Esophagus muscularis mucosa (tissue), 4 donors: ENCODE measurements at regions of chr20 and their contacts with region 1.

Region 1: GRCh38 chr20:37384683-37385174 is 38.8 kb downstream of the SRC start:
- DNase-seq: no peak
- H3K4me3 ChIP-seq: peak overlapping the region; percentile 47 to 66 (median 58)
- H3K27ac ChIP-seq: peak overlapping the region in 2 of 4 donors; percentile 60 to 61
- H3K4me1 ChIP-seq: peaks cover 9 to 25% (median 18%) of the 10 kb centered on the region in 4 donors
- H3K27me3 ChIP-seq: no peaks in the 10 kb centered on the region
- CTCF ChIP-seq: peak; percentile 91 to 96 (median 93)
- EP300 ChIP-seq: no peak
- POLR2A ChIP-seq: no peak

Region 2: DNA sequence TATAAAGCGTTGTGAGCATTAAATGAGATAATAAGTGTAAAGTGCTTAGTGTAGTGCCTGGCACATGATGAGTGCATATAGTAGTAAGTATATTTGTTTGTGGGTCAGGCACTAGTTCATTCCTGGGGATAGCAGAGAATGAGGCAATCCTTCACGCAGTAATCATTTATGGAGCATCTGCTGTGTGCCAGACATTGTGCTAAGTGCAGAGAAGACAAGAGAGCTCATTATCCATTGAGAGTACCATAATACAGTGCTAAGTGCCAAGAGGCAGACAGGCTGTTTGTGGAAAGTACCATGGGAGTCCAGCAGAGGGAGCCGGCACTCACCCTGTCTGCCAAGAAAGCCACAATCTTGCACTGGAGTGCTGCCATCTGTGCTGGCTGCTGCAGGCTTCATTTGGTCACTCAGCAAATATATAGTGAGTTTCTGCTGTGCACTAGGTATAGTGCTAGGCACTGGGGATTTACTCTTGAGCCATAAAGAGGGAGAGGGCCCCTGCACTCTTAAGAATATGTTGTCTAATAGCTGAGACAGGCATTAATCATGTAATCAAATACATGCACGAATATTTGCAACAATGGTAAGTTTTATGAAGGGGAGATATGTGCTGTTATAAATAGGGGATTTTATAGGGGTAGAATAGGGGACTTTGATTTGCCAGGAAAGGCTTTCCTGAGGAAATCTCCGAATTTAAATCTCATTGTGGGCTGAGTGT is 192.4 kb before region 1 on chr20:
- intact Hi-C with region 1: loop called (anchors 5 kb)
- DNase-seq: peak; percentile 95
- H3K4me3 ChIP-seq: no peak overlapping the region
- H3K27ac ChIP-seq: peak overlapping the region in 1 of 4 donors; percentile 18
- H3K4me1 ChIP-seq: peaks cover 33 to 69% (median 67%) of the 10 kb centered on the region in 4 donors
- H3K27me3 ChIP-seq: no peaks in the 10 kb centered on the region
- CTCF ChIP-seq: peak; percentile 91 to 94 (median 93)
- EP300 ChIP-seq: no peak
- POLR2A ChIP-seq: no peak

Region 3: GRCh38 chr20:37282556-37282955 is 102.2 kb before region 1 on chr20:
- intact Hi-C with region 1: loop called (anchors 2 kb)
- DNase-seq: no peak
- H3K4me3 ChIP-seq: no peak overlapping the region
- H3K27ac ChIP-seq: peak overlapping the region; percentile 20 to 56 (median 39)
- H3K4me1 ChIP-seq: peaks cover 0 to 10% (median 7%) of the 10 kb centered on the region in 4 donors
- H3K27me3 ChIP-seq: no peaks in the 10 kb centered on the region
- CTCF ChIP-seq: peak; percentile 47 to 68 (median 66)
- EP300 ChIP-seq: no peak
- POLR2A ChIP-seq: no peak

Region 4: GRCh38 chr20:37345339-37346230 is 39.1 kb before region 1 on chr20 and contains the start of gene SRC:
- intact Hi-C with region 1: loop called (anchors 5 kb)
- DNase-seq: peak; percentile 95
- H3K4me3 ChIP-seq: peak within 1 kb of the TSS; percentile 72 to 91 (median 84)
- H3K27ac ChIP-seq: peak within 1 kb of the TSS; percentile 86 to 96 (median 92)
- H3K4me1 ChIP-seq: peaks cover 4 to 54% (median 43%) of the 10 kb centered on the region in 4 donors
- H3K27me3 ChIP-seq: peaks cover 0 to 10% (median 0%) of the 10 kb centered on the region in 4 donors
- CTCF ChIP-seq: no peak
- EP300 ChIP-seq: no peak
- POLR2A ChIP-seq: no peak
- total RNA-seq, gene SRC: 27.5 to 52.2 (median 42.3) TPM

Region 5: DNA sequence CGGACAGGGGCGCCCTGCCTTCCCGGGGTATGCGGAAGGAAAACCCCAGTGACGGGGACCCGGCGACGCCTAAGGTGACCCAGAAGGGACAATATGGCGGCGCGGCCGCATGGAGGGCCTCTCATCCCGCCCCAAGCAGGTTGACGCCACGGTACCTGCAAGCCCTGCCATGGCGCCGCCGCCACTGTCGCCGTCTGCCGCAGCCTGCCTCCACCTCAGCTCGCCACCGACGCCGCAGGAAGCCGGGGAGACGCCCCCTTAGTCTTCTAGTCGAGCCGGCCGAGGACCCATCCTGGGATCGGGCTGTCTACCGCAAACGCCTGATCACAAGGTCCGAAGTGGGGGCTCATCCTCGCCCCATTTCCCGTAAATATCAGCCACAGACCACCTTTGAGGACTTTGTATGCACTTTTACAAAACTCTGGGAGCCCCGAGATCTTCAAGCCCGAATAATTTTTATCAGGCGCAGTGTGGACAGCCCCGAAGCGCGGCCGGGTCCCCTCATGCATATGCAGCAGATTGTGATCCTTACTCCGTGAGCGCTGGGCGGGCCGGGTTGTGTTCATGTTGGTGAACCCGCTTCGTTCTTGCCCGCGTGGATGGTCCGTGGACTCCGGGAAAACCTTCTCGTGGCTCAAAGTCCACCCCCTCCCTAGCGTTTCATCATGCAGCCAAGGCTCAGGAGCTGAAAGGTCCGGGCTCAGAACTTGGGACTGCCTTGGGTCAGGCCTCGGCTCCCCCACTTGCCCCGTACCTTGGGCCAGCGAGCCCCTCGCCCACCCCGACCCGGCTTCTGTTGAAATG is 143.1 kb after region 1 on chr20 and contains the start of gene BLCAP:
- intact Hi-C with region 1: loop called (anchors 2 kb)
- DNase-seq: peak; percentile 97
- H3K4me3 ChIP-seq: peak within 1 kb of the TSS; percentile 85 to 100 (median 94)
- H3K27ac ChIP-seq: peak within 1 kb of the TSS; percentile 93 to 97 (median 94)
- H3K4me1 ChIP-seq: peaks cover 41 to 54% (median 44%) of the 10 kb centered on the region in 4 donors
- H3K27me3 ChIP-seq: no peaks in the 10 kb centered on the region
- CTCF ChIP-seq: no peak
- EP300 ChIP-seq: no peak
- POLR2A ChIP-seq: peak; percentile 92
- total RNA-seq, gene BLCAP: 41.9 to 59.6 (median 50.9) TPM